ENCODE measurements at regions of chr2 and their contacts with region 1.

Region 1: DNA sequence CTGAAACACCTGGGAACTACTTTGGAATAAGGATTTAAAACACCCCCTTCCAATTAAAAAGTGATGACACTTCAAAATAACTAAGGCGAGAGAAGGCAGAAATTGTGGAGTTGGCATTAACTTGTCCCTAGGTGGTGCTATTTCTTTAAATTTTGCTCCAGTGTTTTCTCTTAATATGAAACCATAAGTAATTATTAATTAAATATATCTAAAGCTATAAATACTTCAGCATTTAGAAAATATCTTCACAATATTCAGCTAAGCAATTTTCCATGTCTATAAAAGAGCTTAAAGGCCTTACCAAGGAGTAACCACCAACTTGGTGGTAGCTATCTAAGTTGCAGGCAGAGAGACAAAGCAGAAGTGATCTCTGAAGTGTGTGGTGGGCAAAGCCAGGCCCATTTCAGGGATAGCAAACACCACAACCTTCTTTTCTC is 186.8 kb upstream of the PGAP1 start:
- DNase-seq: no peak
- H3K4me3 Mint-ChIP-seq: no peak overlapping the region
- H3K27ac Mint-ChIP-seq: no peak overlapping the region
- H3K4me1 Mint-ChIP-seq: peaks cover 14% of the 10 kb centered on the region
- H3K27me3 Mint-ChIP-seq: no peaks in the 10 kb centered on the region

Region 2: GRCh38 chr2:197130318-197130717 is 17.0 kb after region 1 on chr2:
- CTCF ChIA-PET with region 1: interaction called, 27 read pairs
- POLR2A ChIA-PET with region 1: interaction called, 3 read pairs
- DNase-seq: no peak
- H3K4me3 Mint-ChIP-seq: no peak overlapping the region
- H3K27ac Mint-ChIP-seq: peak overlapping the region; percentile 31
- H3K4me1 Mint-ChIP-seq: peaks cover 64% of the 10 kb centered on the region
- H3K27me3 Mint-ChIP-seq: no peaks in the 10 kb centered on the region

Region 3: DNA sequence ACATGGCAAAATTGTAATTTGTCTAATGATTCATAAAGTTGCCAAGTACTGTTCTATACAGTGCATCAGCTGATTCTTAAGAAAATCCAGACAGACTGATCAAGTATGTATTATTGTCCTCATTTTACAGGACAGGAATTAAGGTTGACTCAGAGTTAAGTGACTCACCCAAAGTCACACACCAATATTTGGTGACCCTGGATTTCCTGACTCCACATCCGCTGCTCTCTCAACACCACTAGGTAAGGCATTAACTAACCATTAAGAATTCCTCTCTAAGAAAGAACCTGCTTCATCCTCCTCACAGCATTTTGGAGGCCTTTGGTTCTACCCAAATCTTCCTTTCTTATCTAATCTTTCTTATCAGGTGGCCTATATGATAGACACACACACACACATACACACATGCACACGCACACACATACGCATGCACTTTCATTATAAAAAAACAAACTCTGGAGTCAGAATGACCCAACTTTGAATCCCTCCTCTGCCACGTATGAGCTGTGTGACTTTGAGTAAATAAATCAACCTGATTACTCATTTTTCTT is 46.4 kb after region 1 on chr2:
- CTCF ChIA-PET with region 1: interaction called, 20 read pairs
- POLR2A ChIA-PET with region 1: no interaction called
- DNase-seq: peak; percentile 52
- H3K4me3 Mint-ChIP-seq: no peak overlapping the region
- H3K27ac Mint-ChIP-seq: peak overlapping the region; percentile 80
- H3K4me1 Mint-ChIP-seq: peaks cover 73% of the 10 kb centered on the region
- H3K27me3 Mint-ChIP-seq: no peaks in the 10 kb centered on the region

Region 4: DNA sequence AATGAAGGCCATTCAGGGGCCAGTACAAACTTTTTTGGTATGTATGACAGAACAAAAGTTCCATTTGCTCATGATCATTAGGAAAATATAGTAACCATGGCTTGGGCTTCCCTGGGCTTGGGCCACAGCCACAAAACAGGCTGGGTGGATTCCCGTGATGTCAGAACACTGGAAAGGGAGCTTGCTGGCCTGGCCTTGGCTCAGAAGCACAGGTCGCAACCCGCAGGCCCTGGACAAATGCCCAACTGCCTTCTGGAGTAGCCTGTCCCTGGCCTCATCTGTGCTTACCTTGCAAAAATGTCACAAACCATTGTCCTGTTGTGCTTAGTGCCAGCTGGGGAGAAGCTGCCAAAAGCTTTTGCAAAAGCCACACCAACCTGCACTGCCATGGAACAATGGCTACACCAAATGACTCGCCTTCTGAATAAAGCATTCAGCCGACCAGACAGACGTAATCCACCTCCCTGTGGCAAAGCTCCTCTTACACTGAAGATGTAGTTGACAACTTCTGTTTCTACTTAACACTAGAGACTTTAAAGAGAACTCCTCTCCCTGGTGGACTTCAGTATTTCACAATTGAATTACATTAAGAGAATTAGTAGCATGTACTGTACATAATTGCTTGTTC is 71.8 kb after region 1 on chr2:
- CTCF ChIA-PET with region 1: interaction called, 14 read pairs
- POLR2A ChIA-PET with region 1: interaction called, 3 read pairs
- DNase-seq: no peak
- H3K4me3 Mint-ChIP-seq: no peak overlapping the region
- H3K27ac Mint-ChIP-seq: no peak overlapping the region
- H3K4me1 Mint-ChIP-seq: peaks cover 65% of the 10 kb centered on the region
- H3K27me3 Mint-ChIP-seq: no peaks in the 10 kb centered on the region

Region 5: GRCh38 chr2:197378494-197379307 is 265.4 kb after region 1 on chr2:
- CTCF ChIA-PET with region 1: interaction called, 14 read pairs
- POLR2A ChIA-PET with region 1: no interaction called
- DNase-seq: peak; percentile 65
- H3K4me3 Mint-ChIP-seq: no peak overlapping the region
- H3K27ac Mint-ChIP-seq: no peak overlapping the region
- H3K4me1 Mint-ChIP-seq: peaks cover 20% of the 10 kb centered on the region
- H3K27me3 Mint-ChIP-seq: peaks cover 5% of the 10 kb centered on the region